ENCODE measurements at regions of chr9 and their contacts with region 1.

Region 1: DNA sequence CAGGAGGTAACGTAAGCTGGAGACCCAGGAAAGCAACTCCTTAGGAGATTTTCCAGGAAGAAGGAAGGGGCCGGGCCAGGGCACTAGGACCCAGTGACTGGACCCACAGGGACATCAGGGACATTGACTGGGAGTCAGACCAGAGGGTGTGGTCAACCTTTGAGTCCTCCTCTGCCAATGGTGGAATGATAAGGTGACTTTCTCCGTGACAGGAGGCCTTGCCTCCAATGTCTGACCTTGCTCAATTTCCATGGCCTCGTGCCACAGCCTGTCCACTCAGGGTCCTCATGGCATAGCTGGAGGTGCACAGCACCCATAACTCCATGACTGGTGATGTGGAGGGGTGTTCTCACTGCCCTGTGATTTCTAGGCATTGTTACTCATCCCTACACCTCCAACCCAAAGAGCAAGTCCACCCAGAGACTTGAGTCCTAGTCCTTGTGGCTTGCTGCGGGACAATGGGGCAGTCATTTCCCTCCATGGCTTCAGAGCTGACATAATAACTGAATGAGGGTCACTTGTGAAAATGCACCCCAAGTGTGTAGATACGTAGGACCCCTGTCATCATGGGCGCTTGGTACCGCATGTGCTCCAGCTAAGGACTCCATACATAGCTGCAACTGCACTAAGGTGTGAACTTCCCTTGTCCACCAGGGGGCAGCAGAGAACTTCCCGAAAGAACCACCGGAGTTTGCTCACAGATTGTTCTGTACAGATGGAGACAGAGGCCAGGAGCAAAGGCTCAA is 4.1 kb upstream of the AMBP start:
- DNase-seq: peak; percentile 83
- ATAC-seq: peak; percentile 99
- H3K4me3 ChIP-seq: no peak overlapping the region
- H3K27ac ChIP-seq: no peak overlapping the region
- H3K4me1 ChIP-seq: no peaks in the 10 kb centered on the region; the same call in 1 of the 2 replicates
- H3K27me3 ChIP-seq: peaks cover 41% of the 10 kb centered on the region
- CTCF ChIP-seq: peak; percentile 91
- POLR2A ChIP-seq: no peak
- RAD21 ChIP-seq: peak; percentile 82

Region 2: DNA sequence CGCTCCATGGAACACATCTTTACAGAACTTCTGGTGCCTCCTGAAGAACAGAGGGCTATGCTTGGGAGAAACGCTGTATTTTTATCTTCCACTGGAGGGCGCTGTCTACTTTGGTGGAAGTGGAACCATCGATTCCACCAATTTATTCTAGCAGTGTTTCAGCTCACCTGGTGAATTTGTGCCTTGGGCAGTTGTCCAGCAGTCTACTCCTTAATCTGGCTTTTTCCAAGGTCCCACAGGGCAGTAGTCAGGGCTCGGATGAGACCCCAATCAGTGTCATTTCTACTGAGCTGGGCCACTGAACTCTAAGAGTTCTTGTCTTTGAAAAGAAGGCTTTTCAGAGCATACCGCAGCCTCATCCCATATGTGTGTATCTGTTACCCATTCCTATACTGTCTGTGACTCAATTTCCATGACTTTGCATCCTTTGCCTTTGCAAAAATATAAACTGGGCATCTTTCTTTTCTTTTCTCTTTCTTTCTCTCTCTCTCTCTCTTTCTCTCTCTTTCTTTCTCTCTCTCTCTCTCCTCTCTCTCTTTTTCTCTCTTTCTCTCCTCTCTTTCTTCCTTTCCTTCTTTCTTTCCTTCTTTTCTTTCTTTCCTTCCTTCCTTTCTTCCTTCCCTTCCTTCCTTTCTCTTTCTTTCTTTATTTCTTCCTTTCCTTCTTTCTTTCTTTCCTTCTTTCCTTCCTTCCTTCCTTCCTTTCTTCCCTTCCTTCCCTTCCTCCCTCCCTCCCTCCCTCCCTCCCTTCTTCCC is 344.5 kb before region 1 on chr9:
- CTCF ChIA-PET with region 1: no interaction called
- POLR2A ChIA-PET with region 1: no interaction called
- dilution Hi-C with region 1: no loop called
- in situ Hi-C with region 1: no loop called
- intact Hi-C with region 1: loop called (anchors 2 kb)
- DNase-seq: peak; percentile 51
- ATAC-seq: peak; percentile 68
- H3K4me3 ChIP-seq: no peak overlapping the region
- H3K27ac ChIP-seq: no peak overlapping the region
- H3K4me1 ChIP-seq: no peaks in the 10 kb centered on the region
- H3K27me3 ChIP-seq: peaks cover 25% of the 10 kb centered on the region
- CTCF ChIP-seq: peak; percentile 78
- POLR2A ChIP-seq: no peak
- RAD21 ChIP-seq: peak; percentile 74

Region 3: DNA sequence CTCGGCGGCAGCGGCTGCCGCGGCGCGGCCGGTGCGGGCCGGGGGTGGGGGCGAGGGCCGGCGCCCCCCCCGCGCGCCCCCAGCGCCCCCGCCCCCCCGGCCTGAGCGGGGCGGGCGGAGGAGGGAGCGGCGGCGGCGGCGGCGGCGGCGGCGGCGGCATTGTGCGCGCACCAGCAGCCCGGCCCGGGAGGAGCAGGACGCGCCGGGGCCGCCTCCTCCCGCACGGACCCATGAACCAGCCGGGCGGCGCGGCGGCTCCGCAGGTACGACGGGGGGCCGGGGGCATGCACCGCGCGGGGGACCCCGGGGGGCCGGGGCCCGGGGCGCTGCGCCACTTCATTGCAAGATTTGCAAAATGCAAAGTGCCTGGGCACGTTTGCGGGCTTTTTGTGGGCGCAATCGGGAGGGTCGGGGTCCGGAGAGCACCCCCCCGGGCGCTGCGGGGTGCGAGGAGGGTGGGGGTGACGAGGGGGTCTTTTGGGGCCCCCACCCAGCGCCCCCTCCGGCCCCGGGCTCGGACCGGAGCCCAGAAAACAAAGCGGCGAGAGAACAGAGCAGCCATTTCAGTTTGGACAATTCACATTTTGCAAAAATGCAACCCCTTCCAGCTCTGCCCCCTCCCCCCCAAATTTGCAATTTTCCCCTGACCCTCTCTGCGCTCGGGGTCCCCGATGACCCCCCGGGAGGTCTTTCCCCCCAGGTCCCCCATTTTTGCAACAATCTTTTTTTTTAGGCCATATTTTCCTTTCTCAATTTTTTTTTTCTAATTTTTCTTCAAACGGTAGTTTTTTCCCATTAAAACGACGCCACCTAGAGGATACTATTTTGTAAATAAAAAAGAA is 205.8 kb before region 1 on chr9 and contains the start of gene ZNF618:
- CTCF ChIA-PET with region 1: no interaction called
- POLR2A ChIA-PET with region 1: no interaction called
- dilution Hi-C with region 1: no loop called
- in situ Hi-C with region 1: no loop called
- intact Hi-C with region 1: no loop called
- DNase-seq: peak; percentile 27
- ATAC-seq: peak; percentile 92
- H3K4me3 ChIP-seq: peak within 1 kb of the TSS; percentile 100
- H3K27ac ChIP-seq: peak within 1 kb of the TSS; percentile 99
- H3K4me1 ChIP-seq: peaks cover 5% of the 10 kb centered on the region
- H3K27me3 ChIP-seq: peaks cover 3% of the 10 kb centered on the region
- CTCF ChIP-seq: peak; percentile 45
- POLR2A ChIP-seq: no peak
- RAD21 ChIP-seq: no peak
- total RNA-seq, gene ZNF618: 7.5 and 8.2 TPM in 2 replicates

Region 4: DNA sequence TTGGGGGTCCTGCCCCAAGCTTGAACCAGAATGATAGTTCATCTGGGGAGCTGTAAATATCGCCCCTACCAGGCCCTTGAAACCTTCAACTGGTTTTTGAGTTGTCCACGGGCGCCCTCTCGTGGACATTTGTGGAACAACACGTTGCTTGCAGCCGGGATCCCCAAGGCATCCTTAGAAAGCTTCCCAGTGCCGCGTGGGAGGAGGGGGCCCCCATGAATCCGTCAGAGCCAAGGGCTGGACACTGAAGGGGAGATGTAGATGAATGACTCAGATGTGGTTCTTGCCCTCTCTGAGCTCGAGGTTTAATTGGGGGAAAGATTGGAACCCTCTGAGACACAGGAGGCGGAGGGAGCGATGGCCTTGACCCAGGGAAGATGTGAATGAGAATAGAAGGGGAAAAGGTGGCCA is 208.9 kb after region 1 on chr9:
- CTCF ChIA-PET with region 1: interaction called, 16 read pairs
- POLR2A ChIA-PET with region 1: no interaction called
- dilution Hi-C with region 1: no loop called
- in situ Hi-C with region 1: no loop called
- intact Hi-C with region 1: loop called (anchors 1 kb)
- DNase-seq: peak; percentile 67
- ATAC-seq: peak; percentile 75
- H3K4me3 ChIP-seq: no peak overlapping the region
- H3K27ac ChIP-seq: no peak overlapping the region
- H3K4me1 ChIP-seq: peaks cover 9% of the 10 kb centered on the region
- H3K27me3 ChIP-seq: no peaks in the 10 kb centered on the region
- CTCF ChIP-seq: peak; percentile 91
- POLR2A ChIP-seq: no peak
- RAD21 ChIP-seq: peak; percentile 88

Region 5: GRCh38 chr9:114304416-114305188 is 222.4 kb after region 1 on chr9:
- CTCF ChIA-PET with region 1: interaction called, 3 read pairs
- POLR2A ChIA-PET with region 1: no interaction called
- dilution Hi-C with region 1: no loop called
- in situ Hi-C with region 1: no loop called
- intact Hi-C with region 1: loop called (anchors 1 kb)
- DNase-seq: no peak
- ATAC-seq: no peak
- H3K4me3 ChIP-seq: no peak overlapping the region
- H3K27ac ChIP-seq: no peak overlapping the region
- H3K4me1 ChIP-seq: peaks cover 3% of the 10 kb centered on the region; the same call in 1 of the 2 replicates
- H3K27me3 ChIP-seq: no peaks in the 10 kb centered on the region
- CTCF ChIP-seq: no peak
- POLR2A ChIP-seq: no peak
- RAD21 ChIP-seq: no peak

Measured in IMR-90 (cell line).